ENCODE measurements at regions of chr1 and their contacts with region 1.

Region 1: GRCh38 chr1:161792740-161793139 is 26.6 kb downstream of the ATF6 start:
- DNase-seq: no peak
- H3K4me3 ChIP-seq: no peak overlapping the region
- H3K27ac ChIP-seq: no peak overlapping the region
- H3K4me1 ChIP-seq: peaks cover 0 to 14% (median 9%) of the 10 kb centered on the region in 4 donors
- H3K27me3 ChIP-seq: no peaks in the 10 kb centered on the region
- CTCF ChIP-seq: peak; percentile 59 to 61 (median 61)
- EP300 ChIP-seq: no peak
- POLR2A ChIP-seq: no peak

Region 2: DNA sequence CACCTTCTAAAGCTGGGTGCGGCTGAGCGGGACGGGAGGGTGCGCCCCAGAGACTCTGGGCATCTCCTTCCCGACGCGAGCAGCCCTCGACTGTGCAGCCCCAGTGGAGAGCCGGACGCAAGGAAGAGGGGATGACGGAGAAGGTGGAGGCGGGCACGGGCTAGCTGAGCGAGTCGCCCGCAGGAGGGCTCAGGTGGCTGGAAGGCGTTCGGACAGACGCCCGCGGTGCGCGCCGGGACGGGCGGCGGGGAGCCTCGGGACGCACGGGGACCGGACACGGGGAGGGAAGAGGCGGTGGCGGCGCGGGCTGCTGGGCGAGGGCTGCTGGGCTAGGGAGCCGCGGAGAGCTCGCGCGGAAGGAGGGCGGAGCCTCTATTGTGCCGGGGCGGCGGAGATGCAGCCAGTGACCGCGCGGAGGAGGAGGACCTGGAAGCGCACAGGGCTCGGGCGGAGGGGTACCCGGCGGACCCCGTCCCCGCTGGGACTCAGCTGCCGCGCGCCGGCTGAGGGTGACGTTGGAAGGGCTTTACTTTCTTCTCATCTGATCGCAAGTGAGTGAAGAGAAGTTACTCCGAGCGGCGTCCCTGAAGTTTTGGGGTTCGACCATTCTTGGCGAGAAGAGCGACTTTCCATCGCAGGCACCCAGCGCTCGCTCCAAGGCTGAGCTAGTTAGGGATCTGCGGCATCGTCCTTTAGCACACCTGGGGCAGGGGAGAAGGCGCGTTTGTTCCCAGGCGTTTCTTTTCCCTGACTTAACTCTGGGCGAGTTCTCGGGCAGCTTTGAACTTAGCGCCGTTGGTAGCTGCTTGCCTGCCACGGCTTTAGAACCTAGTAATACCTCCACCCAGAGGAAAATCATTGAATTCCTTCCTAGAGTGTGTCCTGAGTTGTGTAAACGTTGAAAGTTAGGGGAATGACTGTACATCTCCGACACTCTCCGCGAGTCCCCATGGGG is 231.1 kb after region 1 on chr1 and contains the start of gene OLFML2B:
- intact Hi-C with region 1: loop called (anchors 5 kb)
- DNase-seq: no peak
- H3K4me3 ChIP-seq: peak within 1 kb of the TSS; percentile 58 to 69 (median 64)
- H3K27ac ChIP-seq: peak within 1 kb of the TSS; percentile 32 to 64 (median 47)
- H3K4me1 ChIP-seq: peaks cover 21 to 38% (median 25%) of the 10 kb centered on the region in 4 donors
- H3K27me3 ChIP-seq: peaks cover 0 to 35% (median 0%) of the 10 kb centered on the region in 4 donors
- CTCF ChIP-seq: peak in 1 of 3 experiments; percentile 23
- EP300 ChIP-seq: no peak
- POLR2A ChIP-seq: no peak
- total RNA-seq, gene OLFML2B: 1.2 to 6.7 (median 5.9) TPM

Region 3: GRCh38 chr1:162035241-162035640 is 242.5 kb after region 1 on chr1:
- intact Hi-C with region 1: loop called (anchors 2 kb)
- DNase-seq: no peak
- H3K4me3 ChIP-seq: no peak overlapping the region
- H3K27ac ChIP-seq: no peak overlapping the region
- H3K4me1 ChIP-seq: peaks cover 0 to 8% (median 4%) of the 10 kb centered on the region in 4 donors
- H3K27me3 ChIP-seq: no peaks in the 10 kb centered on the region
- CTCF ChIP-seq: no peak
- EP300 ChIP-seq: no peak
- POLR2A ChIP-seq: no peak

Measured in esophagus muscularis mucosa (tissue), 4 donors.